CD4-positive, alpha-beta T cell (primary cell): ENCODE measurements at regions of chr5 and their contacts with region 1.

Region 1: GRCh38 chr5:78294248-78295034 is at the start of gene AP3B1:
- DNase-seq: peak; percentile 92 to 99 (median 96)
- ATAC-seq: peak; percentile 90
- H3K4me3 ChIP-seq: peak within 1 kb of the TSS; percentile 96
- H3K4me3 Mint-ChIP-seq: peak within 1 kb of the TSS; percentile 96
- H3K27ac ChIP-seq: peak within 1 kb of the TSS; percentile 70 to 81
- H3K27ac Mint-ChIP-seq: peak within 1 kb of the TSS; percentile 94
- H3K4me1 ChIP-seq: peaks cover 19% of the 10 kb centered on the region
- H3K4me1 Mint-ChIP-seq: peaks cover 44% of the 10 kb centered on the region
- H3K27me3 ChIP-seq: no peaks in the 10 kb centered on the region
- H3K27me3 Mint-ChIP-seq: no peaks in the 10 kb centered on the region
- CTCF ChIP-seq: no peak
- total RNA-seq, gene AP3B1: 24.5 to 24.6 TPM

Region 2: GRCh38 chr5:77499441-77499840 is 795.0 kb before region 1 on chr5:
- CTCF ChIA-PET with region 1: no interaction called
- POLR2A ChIA-PET with region 1: no interaction called
- intact Hi-C with region 1: loop called in 1 of 2 experiments (anchors 5 kb)
- DNase-seq: no peak
- ATAC-seq: no peak
- H3K4me3 ChIP-seq: no peak overlapping the region
- H3K4me3 Mint-ChIP-seq: no peak overlapping the region
- H3K27ac ChIP-seq: no peak overlapping the region
- H3K27ac Mint-ChIP-seq: no peak overlapping the region
- H3K4me1 ChIP-seq: no peaks in the 10 kb centered on the region
- H3K4me1 Mint-ChIP-seq: no peaks in the 10 kb centered on the region
- H3K27me3 ChIP-seq: no peaks in the 10 kb centered on the region
- H3K27me3 Mint-ChIP-seq: peaks cover 51% of the 10 kb centered on the region
- CTCF ChIP-seq: no peak

Region 3: DNA sequence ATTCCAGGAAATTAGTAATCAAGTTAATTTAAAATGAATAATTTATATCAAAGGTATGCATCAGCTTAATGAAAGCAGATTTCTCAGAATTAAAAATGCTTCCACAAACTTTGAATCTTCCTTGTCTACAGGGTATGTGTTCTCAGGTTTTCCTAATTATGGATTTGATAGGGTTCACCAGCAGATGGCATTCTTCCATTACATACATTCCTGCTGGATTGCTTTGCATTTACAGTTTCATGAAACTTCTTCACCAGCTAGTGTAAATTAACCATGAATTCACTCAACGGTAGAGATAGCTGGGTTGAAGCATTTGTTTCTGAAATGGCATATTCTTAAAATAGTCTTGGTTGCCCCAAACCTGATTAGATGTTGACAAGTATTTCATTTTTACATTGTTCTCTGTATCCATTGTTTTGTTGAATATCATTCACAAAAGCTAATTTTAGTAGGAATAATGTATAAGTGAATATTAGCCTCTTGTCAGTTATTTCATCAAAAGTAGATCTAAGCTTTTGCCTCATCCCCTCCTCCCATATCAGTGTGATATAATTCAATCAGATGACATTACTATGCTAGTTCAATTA is 733.7 kb before region 1 on chr5:
- CTCF ChIA-PET with region 1: no interaction called
- POLR2A ChIA-PET with region 1: no interaction called
- intact Hi-C with region 1: no loop called
- DNase-seq: peak in 3 of 14 experiments; percentile 21 to 35 (median 31)
- ATAC-seq: no peak
- H3K4me3 ChIP-seq: no peak overlapping the region
- H3K4me3 Mint-ChIP-seq: no peak overlapping the region
- H3K27ac ChIP-seq: no peak overlapping the region
- H3K27ac Mint-ChIP-seq: no peak overlapping the region
- H3K4me1 ChIP-seq: no peaks in the 10 kb centered on the region
- H3K4me1 Mint-ChIP-seq: no peaks in the 10 kb centered on the region
- H3K27me3 ChIP-seq: peaks cover 3 to 4% of the 10 kb centered on the region in 2 experiments
- H3K27me3 Mint-ChIP-seq: no peaks in the 10 kb centered on the region
- CTCF ChIP-seq: peak; percentile 27

Region 4: GRCh38 chr5:78005021-78005785 is 289.2 kb before region 1 on chr5:
- CTCF ChIA-PET with region 1: no interaction called
- POLR2A ChIA-PET with region 1: no interaction called
- intact Hi-C with region 1: no loop called
- DNase-seq: no peak
- ATAC-seq: no peak
- H3K4me3 ChIP-seq: no peak overlapping the region
- H3K4me3 Mint-ChIP-seq: no peak overlapping the region
- H3K27ac ChIP-seq: no peak overlapping the region
- H3K27ac Mint-ChIP-seq: no peak overlapping the region
- H3K4me1 ChIP-seq: no peaks in the 10 kb centered on the region
- H3K4me1 Mint-ChIP-seq: no peaks in the 10 kb centered on the region
- H3K27me3 ChIP-seq: no peaks in the 10 kb centered on the region
- H3K27me3 Mint-ChIP-seq: no peaks in the 10 kb centered on the region
- CTCF ChIP-seq: no peak

Region 5: DNA sequence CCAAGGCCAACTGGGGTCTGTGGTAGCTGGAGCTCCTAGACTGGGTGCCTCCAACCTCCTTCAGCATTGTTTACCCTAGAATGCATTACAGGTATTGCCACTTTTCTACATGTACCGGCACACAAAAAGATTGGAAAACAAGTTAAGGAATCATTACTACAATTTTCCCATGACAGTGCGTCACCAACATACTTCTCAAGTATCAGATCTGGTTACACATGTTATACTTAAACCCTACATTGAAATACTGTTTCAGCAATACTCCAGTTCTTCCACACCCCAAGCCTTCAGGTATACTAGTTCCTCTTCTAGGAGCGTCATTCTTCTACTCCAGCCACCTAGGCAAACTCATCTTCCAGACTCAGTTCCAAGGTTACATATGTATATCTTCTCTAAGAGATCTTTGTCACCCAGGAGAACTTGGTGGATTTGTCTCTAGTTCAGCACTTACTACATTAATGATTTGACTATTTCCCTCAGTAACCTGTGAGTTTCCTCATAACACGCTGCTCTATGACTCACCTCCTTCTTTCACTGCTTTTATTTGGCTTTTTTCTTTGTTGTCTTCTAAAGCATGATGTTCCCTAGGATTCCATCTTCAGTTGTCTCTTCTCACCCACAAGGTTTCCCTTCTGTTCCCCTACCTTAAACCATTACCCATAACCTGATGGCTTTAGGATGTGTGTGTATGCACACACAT is 216.9 kb before region 1 on chr5:
- CTCF ChIA-PET with region 1: no interaction called
- POLR2A ChIA-PET with region 1: no interaction called
- intact Hi-C with region 1: no loop called
- DNase-seq: no peak
- ATAC-seq: no peak
- H3K4me3 ChIP-seq: no peak overlapping the region
- H3K4me3 Mint-ChIP-seq: no peak overlapping the region
- H3K27ac ChIP-seq: no peak overlapping the region
- H3K27ac Mint-ChIP-seq: no peak overlapping the region
- H3K4me1 ChIP-seq: no peaks in the 10 kb centered on the region
- H3K4me1 Mint-ChIP-seq: no peaks in the 10 kb centered on the region
- H3K27me3 ChIP-seq: no peaks in the 10 kb centered on the region
- H3K27me3 Mint-ChIP-seq: no peaks in the 10 kb centered on the region
- CTCF ChIP-seq: no peak

Region 6: DNA sequence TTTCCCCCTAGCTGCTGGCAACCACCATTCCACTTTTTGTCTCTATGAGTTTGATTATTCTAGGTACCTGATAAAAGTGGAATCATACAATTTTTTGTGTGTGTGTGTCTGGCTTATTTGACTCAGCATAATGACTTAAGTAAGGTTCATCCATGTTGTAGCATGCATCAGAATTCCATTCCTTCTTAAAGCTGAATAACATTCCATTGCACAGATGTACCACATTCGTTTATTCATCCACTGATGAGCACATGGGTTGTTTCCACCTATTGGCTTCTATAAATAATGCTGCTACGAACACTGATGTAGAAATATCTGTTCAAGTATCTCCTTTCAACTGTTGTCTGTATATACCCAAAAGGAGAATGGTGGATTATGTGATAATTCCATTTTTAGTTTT is 33.7 kb before region 1 on chr5:
- CTCF ChIA-PET with region 1: no interaction called
- POLR2A ChIA-PET with region 1: no interaction called
- intact Hi-C with region 1: no loop called
- DNase-seq: no peak
- ATAC-seq: no peak
- H3K4me3 ChIP-seq: no peak overlapping the region
- H3K4me3 Mint-ChIP-seq: no peak overlapping the region
- H3K27ac ChIP-seq: no peak overlapping the region
- H3K27ac Mint-ChIP-seq: no peak overlapping the region
- H3K4me1 ChIP-seq: no peaks in the 10 kb centered on the region
- H3K4me1 Mint-ChIP-seq: peaks cover 24% of the 10 kb centered on the region
- H3K27me3 ChIP-seq: no peaks in the 10 kb centered on the region
- H3K27me3 Mint-ChIP-seq: no peaks in the 10 kb centered on the region
- CTCF ChIP-seq: no peak

Region 7: GRCh38 chr5:78359831-78360673 is 65.6 kb after region 1 on chr5 and contains the start of gene SCAMP1:
- CTCF ChIA-PET with region 1: interaction called, 46 read pairs
- POLR2A ChIA-PET with region 1: interaction called, 253 read pairs
- intact Hi-C with region 1: loop called (anchors 1 kb)
- DNase-seq: peak; percentile 80 to 96 (median 90)
- ATAC-seq: peak; percentile 79
- H3K4me3 ChIP-seq: peak within 1 kb of the TSS; percentile 96
- H3K4me3 Mint-ChIP-seq: peak within 1 kb of the TSS; percentile 91
- H3K27ac ChIP-seq: peak within 1 kb of the TSS; percentile 86 to 87
- H3K27ac Mint-ChIP-seq: peak within 1 kb of the TSS; percentile 83
- H3K4me1 ChIP-seq: peaks cover 23% of the 10 kb centered on the region
- H3K4me1 Mint-ChIP-seq: peaks cover 53% of the 10 kb centered on the region
- H3K27me3 ChIP-seq: no peaks in the 10 kb centered on the region
- H3K27me3 Mint-ChIP-seq: no peaks in the 10 kb centered on the region
- CTCF ChIP-seq: peak; percentile 27
- total RNA-seq, gene SCAMP1: 16.0 to 18.4 TPM

Region 8: GRCh38 chr5:79229357-79230174 is 935.1 kb after region 1 on chr5:
- CTCF ChIA-PET with region 1: no interaction called
- POLR2A ChIA-PET with region 1: no interaction called
- intact Hi-C with region 1: loop called in 1 of 2 experiments (anchors 5 kb)
- DNase-seq: peak in 4 of 14 experiments; percentile 20 to 81 (median 63)
- ATAC-seq: peak; percentile 87
- H3K4me3 ChIP-seq: no peak overlapping the region
- H3K4me3 Mint-ChIP-seq: no peak overlapping the region
- H3K27ac ChIP-seq: peak overlapping the region in 1 of 2 donors; percentile 24
- H3K27ac Mint-ChIP-seq: no peak overlapping the region
- H3K4me1 ChIP-seq: peaks cover 9% of the 10 kb centered on the region
- H3K4me1 Mint-ChIP-seq: peaks cover 8% of the 10 kb centered on the region
- H3K27me3 ChIP-seq: no peaks in the 10 kb centered on the region
- H3K27me3 Mint-ChIP-seq: no peaks in the 10 kb centered on the region
- CTCF ChIP-seq: no peak

Region 9: DNA sequence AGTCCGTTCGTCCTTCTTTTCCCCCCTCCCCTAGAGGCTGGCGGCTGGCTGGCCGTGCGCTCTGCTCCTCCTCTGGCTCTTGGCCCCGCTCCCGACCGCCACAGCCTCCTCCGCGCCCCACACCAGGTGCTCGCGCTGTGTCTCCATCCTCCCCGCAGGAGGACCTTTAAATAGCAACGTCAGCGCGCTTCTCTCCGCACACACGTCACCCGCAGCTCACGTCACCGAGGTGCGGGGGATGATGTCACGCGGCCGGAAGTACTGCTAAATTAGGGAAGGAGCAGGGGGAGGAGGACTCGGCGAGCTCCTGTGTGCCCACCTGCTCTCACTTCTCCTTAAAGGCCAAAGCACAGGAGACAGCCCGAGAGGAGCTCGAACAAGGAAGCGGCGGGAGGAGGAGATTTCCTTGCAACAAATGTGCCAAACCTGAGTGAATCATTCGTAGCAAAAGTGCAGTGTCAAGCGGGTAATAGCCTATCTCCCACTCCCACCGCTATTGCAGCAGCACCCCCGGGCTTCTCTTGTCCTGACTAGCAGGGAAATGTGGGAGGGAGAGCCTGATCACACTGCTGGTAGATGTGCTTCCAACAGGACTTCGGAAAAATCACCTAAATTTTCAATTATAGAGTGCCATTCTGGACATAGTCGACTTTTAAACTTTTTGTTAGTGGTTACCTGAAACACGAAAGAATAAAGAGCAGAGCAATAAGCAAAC is 1220.1 kb after region 1 on chr5:
- CTCF ChIA-PET with region 1: no interaction called
- POLR2A ChIA-PET with region 1: no interaction called
- intact Hi-C with region 1: loop called in 1 of 2 experiments (anchors 10 kb)
- DNase-seq: peak; percentile 76 to 97 (median 87)
- ATAC-seq: peak; percentile 85
- H3K4me3 ChIP-seq: peak overlapping the region; percentile 79
- H3K4me3 Mint-ChIP-seq: peak overlapping the region; percentile 98
- H3K27ac ChIP-seq: peak overlapping the region; percentile 69 to 89
- H3K27ac Mint-ChIP-seq: peak overlapping the region; percentile 96
- H3K4me1 ChIP-seq: peaks cover 19% of the 10 kb centered on the region
- H3K4me1 Mint-ChIP-seq: peaks cover 41% of the 10 kb centered on the region
- H3K27me3 ChIP-seq: peaks cover 5 to 15% of the 10 kb centered on the region in 2 experiments
- H3K27me3 Mint-ChIP-seq: peaks cover 34% of the 10 kb centered on the region
- CTCF ChIP-seq: no peak